T-cell (primary cell): ENCODE measurements at regions of chr12 and their contacts with region 1.

Region 1: GRCh38 chr12:54324617-54325441 is at the start of gene COPZ1:
- DNase-seq: peak; percentile 81 to 98 (median 95)
- ATAC-seq: peak; percentile 95 to 97 (median 96)
- H3K4me3 ChIP-seq: peak within 1 kb of the TSS; percentile 72 to 80
- H3K4me3 Mint-ChIP-seq: peak within 1 kb of the TSS; percentile 94 to 100 (median 95)
- H3K27ac ChIP-seq: peak within 1 kb of the TSS; percentile 60
- H3K27ac Mint-ChIP-seq: peak within 1 kb of the TSS; percentile 91 to 98
- H3K4me1 ChIP-seq: peaks cover 5 to 23% of the 10 kb centered on the region in 2 experiments
- H3K4me1 Mint-ChIP-seq: peaks cover 38 to 48% (median 39%) of the 10 kb centered on the region in 3 donors
- H3K27me3 ChIP-seq: no peaks in the 10 kb centered on the region
- H3K27me3 Mint-ChIP-seq: no peaks in the 10 kb centered on the region
- total RNA-seq, gene COPZ1: 60.4 to 81.3 (median 74.8) TPM

Region 2: GRCh38 chr12:54012631-54013409 is 312.0 kb before region 1 on chr12:
- CTCF ChIA-PET with region 1: interaction called in 1 of 2 experiments, 3 read pairs
- POLR2A ChIA-PET with region 1: interaction called in 1 of 2 experiments, 10 read pairs
- DNase-seq: no peak
- ATAC-seq: no peak
- H3K4me3 ChIP-seq: no peak overlapping the region
- H3K4me3 Mint-ChIP-seq: no peak overlapping the region
- H3K27ac ChIP-seq: no peak overlapping the region
- H3K27ac Mint-ChIP-seq: no peak overlapping the region
- H3K4me1 ChIP-seq: peaks cover 0 to 50% of the 10 kb centered on the region in 2 experiments
- H3K4me1 Mint-ChIP-seq: peaks cover 36 to 45% (median 40%) of the 10 kb centered on the region in 3 donors
- H3K27me3 ChIP-seq: peaks cover 20 to 95% of the 10 kb centered on the region in 2 experiments
- H3K27me3 Mint-ChIP-seq: peaks cover 68 to 89% of the 10 kb centered on the region in 2 donors

Region 3: GRCh38 chr12:54270345-54270744 is 54.5 kb before region 1 on chr12:
- CTCF ChIA-PET with region 1: interaction called in 1 of 2 experiments, 7 read pairs
- POLR2A ChIA-PET with region 1: interaction called, 6 to 10 read pairs
- DNase-seq: no peak
- ATAC-seq: no peak
- H3K4me3 ChIP-seq: no peak overlapping the region
- H3K4me3 Mint-ChIP-seq: no peak overlapping the region
- H3K27ac ChIP-seq: no peak overlapping the region
- H3K27ac Mint-ChIP-seq: peak overlapping the region; percentile 11 to 49
- H3K4me1 ChIP-seq: no peaks in the 10 kb centered on the region
- H3K4me1 Mint-ChIP-seq: peaks cover 31 to 39% (median 35%) of the 10 kb centered on the region in 3 donors
- H3K27me3 ChIP-seq: no peaks in the 10 kb centered on the region
- H3K27me3 Mint-ChIP-seq: no peaks in the 10 kb centered on the region

Region 4: DNA sequence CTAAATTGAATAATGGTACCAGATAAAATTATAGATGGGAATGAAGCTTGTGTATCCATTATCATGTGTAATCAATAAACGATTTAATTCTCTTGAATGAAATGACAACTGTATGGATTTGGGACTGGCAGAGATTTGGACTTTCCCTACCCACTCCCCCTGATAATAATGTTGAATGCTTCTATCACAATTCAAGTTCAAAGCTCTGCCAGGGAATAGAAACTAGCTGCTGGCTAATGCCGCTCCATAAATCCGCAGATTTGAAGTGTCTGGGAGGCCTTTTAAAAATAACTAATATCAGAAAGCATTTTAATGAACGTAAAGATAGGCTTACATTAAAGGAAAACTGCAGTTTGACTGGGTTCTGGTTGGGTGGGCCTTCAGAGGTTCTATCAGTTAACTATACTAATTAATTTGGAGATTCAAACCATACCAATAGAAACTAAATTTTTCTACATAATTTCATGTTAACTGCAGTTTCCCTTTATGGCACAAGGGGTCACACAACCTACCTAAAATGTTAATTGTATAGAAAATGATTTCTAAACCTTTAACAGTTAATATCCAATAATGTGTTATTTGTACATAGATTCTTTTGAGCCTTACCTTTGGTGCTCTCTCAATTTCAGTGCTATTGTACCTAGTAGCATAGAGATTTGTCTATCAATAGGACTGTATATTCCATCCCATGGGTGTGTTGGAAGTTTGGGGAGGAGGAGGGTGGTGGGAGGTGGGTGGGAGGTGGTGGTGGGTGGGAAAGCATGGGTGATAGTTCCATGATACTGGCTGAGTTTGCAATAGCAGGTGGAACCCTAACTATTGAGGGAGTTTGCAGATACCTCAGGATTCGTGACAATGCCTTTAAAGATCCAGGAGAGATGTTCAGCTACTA is 39.4 kb before region 1 on chr12:
- CTCF ChIA-PET with region 1: interaction called in 1 of 2 experiments, 68 read pairs
- POLR2A ChIA-PET with region 1: interaction called, 18 to 39 read pairs
- DNase-seq: no peak
- ATAC-seq: no peak
- H3K4me3 ChIP-seq: no peak overlapping the region
- H3K4me3 Mint-ChIP-seq: peak overlapping the region in 2 of 3 donors; percentile 34 to 55
- H3K27ac ChIP-seq: no peak overlapping the region
- H3K27ac Mint-ChIP-seq: peak overlapping the region; percentile 44 to 61
- H3K4me1 ChIP-seq: peaks cover 25 to 37% of the 10 kb centered on the region in 2 experiments
- H3K4me1 Mint-ChIP-seq: peaks cover 7 to 60% (median 10%) of the 10 kb centered on the region in 3 donors
- H3K27me3 ChIP-seq: no peaks in the 10 kb centered on the region
- H3K27me3 Mint-ChIP-seq: no peaks in the 10 kb centered on the region

Region 5: DNA sequence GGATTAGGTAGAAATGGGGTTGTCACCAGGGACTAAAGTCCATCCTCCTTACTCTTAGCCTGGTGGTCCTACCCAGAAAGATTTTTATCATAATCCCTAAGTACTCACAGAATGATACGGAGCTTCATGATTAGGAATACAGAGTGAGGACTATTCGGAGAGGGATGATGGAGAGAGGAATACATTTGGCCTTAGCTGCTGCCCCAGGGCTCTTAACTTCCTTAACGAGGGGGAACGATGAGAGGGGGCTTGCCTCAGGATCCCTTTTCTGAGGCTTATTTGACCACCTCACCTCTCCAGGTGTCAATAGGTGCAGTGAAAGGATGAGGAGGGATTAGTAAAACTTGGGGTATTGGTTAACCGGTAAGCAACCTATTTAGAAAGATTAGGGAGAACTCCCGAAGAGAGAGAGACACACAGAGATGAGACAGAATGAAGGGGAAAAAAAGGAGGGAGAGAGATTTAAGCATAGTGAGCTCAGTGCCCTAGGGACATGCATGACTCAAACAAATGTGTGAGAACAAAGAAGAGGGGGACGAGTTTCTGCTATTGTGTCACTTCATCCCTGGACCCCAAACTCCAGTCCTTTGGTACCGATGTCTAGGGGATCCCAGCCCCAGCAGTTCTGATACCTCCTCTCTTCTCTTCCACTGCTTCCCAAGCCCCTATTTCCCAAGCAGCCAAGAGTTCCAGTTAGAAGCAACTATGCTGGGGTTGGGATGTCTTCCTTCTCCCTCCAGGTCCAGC is 25.1 kb before region 1 on chr12:
- CTCF ChIA-PET with region 1: interaction called in 1 of 2 experiments, 10 read pairs
- POLR2A ChIA-PET with region 1: interaction called, 3 read pairs
- DNase-seq: no peak
- ATAC-seq: no peak
- H3K4me3 ChIP-seq: no peak overlapping the region
- H3K4me3 Mint-ChIP-seq: peak overlapping the region in 1 of 3 donors; percentile 1
- H3K27ac ChIP-seq: no peak overlapping the region
- H3K27ac Mint-ChIP-seq: peak overlapping the region in 1 of 2 donors; percentile 29
- H3K4me1 ChIP-seq: peaks cover 0 to 25% of the 10 kb centered on the region in 2 experiments
- H3K4me1 Mint-ChIP-seq: peaks cover 16 to 32% (median 19%) of the 10 kb centered on the region in 3 donors
- H3K27me3 ChIP-seq: peaks cover 0 to 43% of the 10 kb centered on the region in 2 experiments
- H3K27me3 Mint-ChIP-seq: peaks cover 38 to 40% of the 10 kb centered on the region in 2 donors

Region 6: DNA sequence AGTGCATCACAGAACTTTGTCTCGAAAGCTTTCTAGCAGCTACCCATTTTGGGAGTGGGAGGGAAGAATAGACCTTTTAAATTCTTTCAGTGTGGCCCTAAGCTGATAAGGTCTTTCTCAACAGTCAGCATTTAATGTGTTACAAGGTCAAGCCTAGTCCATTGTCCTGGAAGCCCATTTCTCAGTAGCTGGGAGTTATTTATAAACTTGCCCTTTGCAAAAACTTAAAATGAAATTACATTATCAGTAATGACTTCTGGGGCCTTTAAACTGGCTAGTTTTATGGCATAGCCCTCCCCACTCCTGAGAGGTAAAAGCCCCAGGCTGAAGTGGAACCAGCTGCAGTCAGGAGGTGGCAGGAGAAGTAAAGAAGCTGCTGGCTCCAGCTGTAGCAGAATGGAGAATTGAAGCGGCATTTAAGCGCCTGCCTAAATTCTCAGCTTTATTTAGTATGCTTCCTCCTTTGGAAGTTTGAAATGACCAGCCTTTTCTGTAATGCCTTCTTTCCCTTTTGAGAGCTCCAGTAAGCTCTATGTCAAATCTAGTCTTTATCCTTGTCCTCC is 12.5 kb after region 1 on chr12:
- CTCF ChIA-PET with region 1: interaction called, 13 to 47 read pairs
- POLR2A ChIA-PET with region 1: interaction called in 1 of 2 experiments, 4 read pairs
- DNase-seq: no peak
- ATAC-seq: no peak
- H3K4me3 ChIP-seq: no peak overlapping the region
- H3K4me3 Mint-ChIP-seq: no peak overlapping the region
- H3K27ac ChIP-seq: no peak overlapping the region
- H3K27ac Mint-ChIP-seq: peak overlapping the region in 1 of 2 donors; percentile 34
- H3K4me1 ChIP-seq: peaks cover 3 to 4% of the 10 kb centered on the region in 2 experiments
- H3K4me1 Mint-ChIP-seq: peaks cover 28 to 38% (median 32%) of the 10 kb centered on the region in 3 donors
- H3K27me3 ChIP-seq: no peaks in the 10 kb centered on the region
- H3K27me3 Mint-ChIP-seq: no peaks in the 10 kb centered on the region

Region 7: DNA sequence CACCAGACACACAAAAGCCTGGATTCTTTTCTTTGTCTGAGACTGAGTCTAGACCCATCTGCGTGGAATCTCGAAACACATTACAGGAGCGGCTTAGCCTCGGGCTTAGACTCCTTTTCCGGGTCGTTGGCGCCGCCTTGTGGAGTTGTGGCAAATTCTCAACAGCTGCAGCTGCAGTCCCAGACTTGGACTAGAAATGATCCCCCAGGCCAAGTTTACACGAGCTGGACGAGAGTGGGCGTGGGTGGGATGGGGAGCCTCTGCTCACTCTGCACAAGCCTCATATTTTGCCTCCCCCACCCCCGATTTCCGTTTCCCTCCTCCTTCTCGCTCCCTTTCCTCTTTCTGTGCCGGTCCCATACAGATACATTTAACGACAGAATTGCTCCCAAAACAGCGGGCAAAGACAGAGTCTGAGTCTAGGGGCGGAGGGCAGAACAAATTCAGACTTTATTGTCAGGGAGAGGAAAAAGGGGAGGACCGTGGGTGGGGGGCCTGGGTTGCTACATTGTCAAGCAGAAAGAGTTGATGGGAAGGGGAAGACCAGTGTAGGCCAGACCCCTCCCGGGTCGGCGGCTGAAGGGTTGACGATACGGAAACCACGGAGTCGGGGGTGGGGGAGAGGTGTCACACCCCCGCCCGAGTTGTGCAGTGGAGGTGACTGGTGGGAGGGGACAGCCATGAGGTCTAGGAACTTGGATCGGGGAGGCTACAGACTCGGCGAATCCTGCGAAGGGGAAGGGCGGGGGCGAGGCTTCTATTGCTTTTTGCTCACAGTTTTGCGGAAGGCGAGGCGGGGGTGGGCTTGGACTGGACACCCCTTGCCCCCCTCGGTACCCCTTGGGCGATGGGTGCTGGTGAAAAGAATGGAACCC is 44.1 kb after region 1 on chr12:
- CTCF ChIA-PET with region 1: interaction called in 1 of 2 experiments, 17 read pairs
- POLR2A ChIA-PET with region 1: no interaction called
- DNase-seq: peak; percentile 70 to 93 (median 87)
- ATAC-seq: peak; percentile 88 to 92 (median 91)
- H3K4me3 ChIP-seq: peak overlapping the region; percentile 26 to 29
- H3K4me3 Mint-ChIP-seq: peak overlapping the region; percentile 59 to 71 (median 68)
- H3K27ac ChIP-seq: no peak overlapping the region
- H3K27ac Mint-ChIP-seq: peak overlapping the region in 1 of 2 donors; percentile 57
- H3K4me1 ChIP-seq: peaks cover 15 to 34% of the 10 kb centered on the region in 2 experiments
- H3K4me1 Mint-ChIP-seq: peaks cover 32 to 46% (median 43%) of the 10 kb centered on the region in 3 donors
- H3K27me3 ChIP-seq: peaks cover 0 to 2% of the 10 kb centered on the region in 2 experiments
- H3K27me3 Mint-ChIP-seq: no peaks in the 10 kb centered on the region

Region 8: DNA sequence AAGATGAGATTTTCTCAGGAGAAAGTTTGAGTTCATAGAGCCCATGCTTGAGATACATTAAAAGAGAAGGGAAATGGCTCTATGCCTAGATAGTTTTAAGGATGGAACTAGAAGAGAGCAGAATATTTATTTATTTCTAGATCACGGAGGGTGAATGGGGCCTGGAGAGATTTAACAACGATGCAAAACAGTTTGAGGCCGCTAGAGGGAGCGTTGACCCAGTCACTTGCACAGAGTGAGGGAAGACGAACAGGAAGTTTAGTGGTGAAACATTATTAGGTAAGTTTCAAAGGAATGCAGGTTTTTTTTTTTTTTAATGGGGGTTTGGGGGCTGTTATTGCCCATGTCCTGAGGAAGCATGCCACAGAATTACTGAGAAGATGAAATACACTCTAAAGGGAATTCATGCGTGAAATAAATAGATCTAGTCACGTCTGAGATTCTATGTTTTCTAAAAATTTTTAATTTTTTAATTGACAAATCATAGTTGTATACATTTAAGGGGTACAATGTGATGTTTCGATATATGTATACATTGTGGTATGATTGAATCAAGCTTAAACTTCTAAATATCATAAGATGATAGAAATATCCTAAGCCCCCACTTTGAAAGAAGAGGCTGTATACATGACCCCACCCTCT is 278.5 kb after region 1 on chr12:
- CTCF ChIA-PET with region 1: no interaction called
- POLR2A ChIA-PET with region 1: no interaction called
- DNase-seq: peak; percentile 32 to 77 (median 56)
- ATAC-seq: peak; percentile 88 to 91 (median 90)
- H3K4me3 ChIP-seq: no peak overlapping the region
- H3K4me3 Mint-ChIP-seq: no peak overlapping the region
- H3K27ac ChIP-seq: no peak overlapping the region
- H3K27ac Mint-ChIP-seq: peak overlapping the region in 1 of 2 donors; percentile 16
- H3K4me1 ChIP-seq: no peaks in the 10 kb centered on the region
- H3K4me1 Mint-ChIP-seq: peaks cover 6 to 8% (median 8%) of the 10 kb centered on the region in 3 donors
- H3K27me3 ChIP-seq: peaks cover 0 to 11% of the 10 kb centered on the region in 2 experiments
- H3K27me3 Mint-ChIP-seq: peaks cover 3 to 23% of the 10 kb centered on the region in 2 donors